Prostate gland (tissue), 2 donors: ENCODE measurements at regions of chr6 and their contacts with region 1.

Region 1: GRCh38 chr6:117449549-117450439 is 24.1 kb upstream of the ROS1 start:
- DNase-seq: peak; percentile 31
- H3K4me3 ChIP-seq: no peak overlapping the region
- H3K27ac ChIP-seq: no peak overlapping the region
- H3K4me1 ChIP-seq: no peaks in the 10 kb centered on the region
- H3K27me3 ChIP-seq: peaks cover 3% of the 10 kb centered on the region
- CTCF ChIP-seq: peak; percentile 45 to 82 (median 66)
- POLR2A ChIP-seq: no peak

Region 2: GRCh38 chr6:117194978-117195377 is 254.8 kb before region 1 on chr6:
- intact Hi-C with region 1: no loop called
- DNase-seq: no peak
- H3K4me3 ChIP-seq: no peak overlapping the region
- H3K27ac ChIP-seq: no peak overlapping the region
- H3K4me1 ChIP-seq: no peaks in the 10 kb centered on the region
- H3K27me3 ChIP-seq: no peaks in the 10 kb centered on the region
- CTCF ChIP-seq: no peak
- POLR2A ChIP-seq: no peak

Region 3: GRCh38 chr6:117555882-117556498 is 106.2 kb after region 1 on chr6:
- intact Hi-C with region 1: loop called (anchors 2 kb)
- DNase-seq: peak; percentile 36
- H3K4me3 ChIP-seq: no peak overlapping the region
- H3K27ac ChIP-seq: no peak overlapping the region
- H3K4me1 ChIP-seq: no peaks in the 10 kb centered on the region
- H3K27me3 ChIP-seq: no peaks in the 10 kb centered on the region
- CTCF ChIP-seq: peak; percentile 63 to 95 (median 80)
- POLR2A ChIP-seq: no peak